Activated naive CD4-positive, alpha-beta T cell treated with anti-CD3 and anti-CD28 coated beads for 36 hours (primary cell): ENCODE measurements at regions of chr14 and their contacts with region 1.

Region 1: GRCh38 chr14:61296719-61297502 is 15.8 kb upstream of the TMEM30B start:
- DNase-seq: peak; percentile 31
- H3K4me3 Mint-ChIP-seq: peak overlapping the region; percentile 36
- H3K27ac Mint-ChIP-seq: no peak overlapping the region
- H3K4me1 Mint-ChIP-seq: peaks cover 51% of the 10 kb centered on the region
- H3K27me3 Mint-ChIP-seq: no peaks in the 10 kb centered on the region

Region 2: GRCh38 chr14:61076556-61076955 is 220.4 kb before region 1 on chr14:
- CTCF ChIA-PET with region 1: no interaction called
- intact Hi-C with region 1: no loop called
- DNase-seq: no peak
- H3K4me3 Mint-ChIP-seq: no peak overlapping the region
- H3K27ac Mint-ChIP-seq: no peak overlapping the region
- H3K4me1 Mint-ChIP-seq: no peaks in the 10 kb centered on the region
- H3K27me3 Mint-ChIP-seq: no peaks in the 10 kb centered on the region

Region 3: DNA sequence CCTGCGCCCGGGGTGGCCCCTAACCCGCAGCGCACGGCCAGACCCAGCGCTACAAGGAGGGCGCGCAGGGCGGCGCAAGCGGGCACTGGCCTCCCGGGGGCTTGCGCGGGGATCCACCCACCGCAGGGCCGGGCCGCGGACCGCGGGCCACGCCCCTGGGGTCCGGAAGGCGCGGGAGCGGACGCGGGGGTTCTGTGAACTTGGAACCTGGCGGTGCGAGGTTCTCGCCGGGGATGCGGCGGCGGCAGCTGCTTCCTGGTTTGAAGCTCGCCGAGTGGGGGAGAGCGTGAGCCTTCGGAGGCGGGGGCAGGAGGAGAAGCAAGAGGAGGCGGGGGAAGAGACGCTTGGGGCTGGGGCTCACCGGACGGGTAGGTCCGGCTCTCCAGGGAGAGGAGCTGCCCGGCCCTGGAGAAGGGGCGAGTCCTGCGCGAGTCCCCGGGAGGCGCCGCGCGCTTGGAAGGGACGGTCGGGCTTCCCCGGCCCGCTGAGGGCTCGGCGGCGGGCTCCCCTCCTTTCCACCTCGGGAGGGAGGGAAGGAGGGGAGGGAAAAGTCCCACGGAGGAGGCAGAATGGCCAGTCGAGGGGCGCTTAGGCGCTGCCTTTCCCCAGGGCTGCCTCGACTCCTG is 24.6 kb after region 1 on chr14 and contains the start of gene PRKCH:
- CTCF ChIA-PET with region 1: interaction called, 10 read pairs
- intact Hi-C with region 1: loop called (anchors 1 kb)
- DNase-seq: peak; percentile 91
- H3K4me3 Mint-ChIP-seq: peak within 1 kb of the TSS; percentile 99
- H3K27ac Mint-ChIP-seq: peak within 1 kb of the TSS; percentile 95
- H3K4me1 Mint-ChIP-seq: peaks cover 25% of the 10 kb centered on the region
- H3K27me3 Mint-ChIP-seq: no peaks in the 10 kb centered on the region
- total RNA-seq, gene PRKCH: 149 to 158 TPM

Region 4: GRCh38 chr14:61456720-61457119 is 159.8 kb after region 1 on chr14:
- CTCF ChIA-PET with region 1: interaction called, 6 read pairs
- intact Hi-C with region 1: loop called (anchors 1 kb)
- DNase-seq: peak; percentile 94
- H3K4me3 Mint-ChIP-seq: no peak overlapping the region
- H3K27ac Mint-ChIP-seq: peak overlapping the region; percentile 66
- H3K4me1 Mint-ChIP-seq: peaks cover 82% of the 10 kb centered on the region
- H3K27me3 Mint-ChIP-seq: no peaks in the 10 kb centered on the region

Region 5: DNA sequence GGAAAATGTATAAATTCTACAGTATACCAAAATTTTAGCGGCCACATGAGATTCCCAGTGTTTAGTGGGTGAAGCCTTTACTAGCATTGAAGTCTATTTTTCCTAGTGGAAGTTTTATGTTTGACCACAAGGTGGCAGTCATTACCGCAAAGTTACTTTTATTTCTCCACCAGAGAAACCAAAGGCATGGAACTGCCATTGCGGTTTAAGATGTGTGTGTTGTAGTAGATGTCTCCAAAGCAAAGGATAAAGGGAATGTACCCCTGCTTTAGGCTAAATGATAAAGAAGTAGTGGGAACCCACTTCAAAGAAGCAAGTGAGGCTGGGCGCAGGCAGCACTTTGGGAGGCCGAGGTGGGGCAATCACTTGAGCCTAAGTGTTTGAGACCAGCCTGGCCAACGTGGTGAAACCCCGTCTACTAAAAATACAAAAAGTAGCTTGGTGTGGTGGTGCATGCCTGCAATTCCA is 164.9 kb after region 1 on chr14:
- CTCF ChIA-PET with region 1: interaction called, 5 read pairs
- intact Hi-C with region 1: loop called (anchors 2 kb)
- DNase-seq: peak; percentile 60
- H3K4me3 Mint-ChIP-seq: peak overlapping the region; percentile 27
- H3K27ac Mint-ChIP-seq: peak overlapping the region; percentile 93
- H3K4me1 Mint-ChIP-seq: peaks cover 71% of the 10 kb centered on the region
- H3K27me3 Mint-ChIP-seq: no peaks in the 10 kb centered on the region

Region 6: DNA sequence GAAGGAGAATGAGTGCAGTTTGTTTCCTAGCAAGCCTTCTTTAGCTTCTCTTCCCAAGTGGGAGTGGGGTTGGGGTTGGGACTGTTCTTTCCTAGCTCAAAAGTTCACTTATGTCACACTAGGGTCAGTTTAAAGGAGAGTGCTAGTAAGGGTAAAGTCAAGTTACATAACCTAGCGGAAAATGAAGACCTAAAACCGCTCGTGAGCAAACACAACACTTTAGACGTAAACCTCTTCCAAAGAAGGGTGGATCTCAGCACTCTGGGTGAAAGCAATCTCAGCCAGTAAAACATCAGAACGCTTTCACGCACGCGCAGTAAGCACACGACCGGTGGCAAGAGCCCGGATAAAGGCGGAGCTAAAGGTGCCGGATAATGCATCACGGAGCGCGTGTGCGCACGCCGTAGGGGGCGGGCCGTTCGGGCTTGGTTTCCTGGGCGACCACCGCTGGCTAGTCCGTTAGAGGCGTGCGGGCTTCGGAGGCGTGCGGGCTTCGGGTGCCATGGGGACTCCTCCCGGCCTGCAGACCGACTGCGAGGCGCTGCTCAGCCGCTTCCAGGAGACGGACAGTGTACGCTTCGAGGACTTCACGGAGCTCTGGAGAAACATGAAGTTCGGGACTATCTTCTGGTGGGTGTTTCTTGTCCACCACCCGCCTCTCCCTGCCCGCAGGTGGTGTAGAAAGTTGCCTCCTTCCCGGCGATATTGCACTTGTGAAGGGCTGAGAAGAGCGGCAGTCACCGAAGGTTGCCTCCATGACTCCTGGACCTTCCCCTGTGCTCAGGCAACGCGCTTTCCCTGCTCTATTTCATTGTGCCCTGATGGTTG is 465.3 kb after region 1 on chr14 and contains the start of gene SNAPC1:
- CTCF ChIA-PET with region 1: no interaction called
- intact Hi-C with region 1: loop called (anchors 5 kb)
- DNase-seq: peak; percentile 99
- H3K4me3 Mint-ChIP-seq: peak within 1 kb of the TSS; percentile 97
- H3K27ac Mint-ChIP-seq: peak within 1 kb of the TSS; percentile 96
- H3K4me1 Mint-ChIP-seq: peaks cover 40% of the 10 kb centered on the region
- H3K27me3 Mint-ChIP-seq: no peaks in the 10 kb centered on the region
- total RNA-seq, gene SNAPC1: 8.7 to 9.2 TPM